Posterior vena cava (tissue), 2 donors: ENCODE measurements at regions of chr14 and their contacts with region 1.

Region 1: DNA sequence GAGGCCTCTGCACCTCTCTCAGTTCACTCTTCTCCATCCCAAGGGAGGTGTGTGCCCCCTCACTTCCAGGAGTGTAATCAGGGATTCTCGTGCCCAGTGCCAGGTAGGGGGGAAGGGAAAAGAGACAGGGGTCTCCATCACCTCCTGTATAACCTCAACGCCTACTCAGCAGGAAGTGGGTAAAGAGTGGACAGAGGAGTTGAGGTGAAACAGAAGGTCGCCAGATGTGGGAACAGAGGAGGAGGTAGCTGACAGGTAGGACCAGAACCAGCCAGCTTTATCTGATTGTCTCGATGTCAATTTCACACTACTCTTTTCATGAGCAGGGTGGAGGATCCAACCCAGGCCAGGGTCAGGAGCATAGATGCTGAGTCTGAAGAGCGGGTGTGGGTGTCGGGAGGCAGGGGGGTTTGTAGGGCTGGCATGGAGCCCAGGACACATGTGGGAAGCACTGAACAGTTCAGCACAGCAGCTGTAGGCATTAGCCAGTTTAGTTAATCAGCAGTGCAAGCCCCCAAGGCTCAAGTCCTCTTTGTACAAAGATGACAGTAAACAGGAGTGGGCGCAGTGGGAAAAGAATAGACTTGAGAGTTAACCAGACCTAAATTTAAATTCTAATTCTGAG is 213.5 kb downstream of the PELI2 start:
- DNase-seq: no peak

Region 2: DNA sequence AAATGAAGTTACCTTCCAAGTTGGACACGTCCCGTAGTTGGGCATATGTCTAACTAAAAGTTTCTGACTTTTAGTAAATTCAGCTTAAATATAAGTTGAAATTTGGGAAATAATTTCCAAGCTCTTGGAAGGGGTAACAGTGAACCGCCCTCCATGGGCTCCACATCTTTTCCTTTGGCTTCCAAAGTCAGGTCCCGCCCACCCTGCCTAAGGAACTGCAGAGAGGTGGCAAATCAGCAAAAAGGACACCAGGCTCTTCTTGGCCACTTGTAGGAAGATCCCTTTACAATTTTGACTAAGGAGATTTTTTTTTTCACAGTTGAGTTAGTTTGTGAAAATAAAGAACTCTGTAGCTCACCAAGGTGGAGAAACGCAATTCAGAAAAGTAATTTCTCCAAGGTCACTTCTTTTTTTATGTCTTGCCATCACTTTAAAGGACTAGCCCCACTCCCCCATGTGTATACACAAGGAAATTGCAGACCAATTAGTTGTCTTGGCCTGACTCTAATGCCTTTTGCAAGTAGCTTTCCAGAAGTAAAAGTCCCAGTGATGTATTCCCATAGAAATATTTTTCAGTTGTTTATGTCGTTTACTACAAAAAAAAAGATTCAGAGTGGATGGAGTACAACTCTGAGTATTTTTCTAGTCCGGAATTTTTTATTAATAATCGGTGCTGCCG is 32.3 kb before region 1 on chr14:
- intact Hi-C with region 1: loop called in 1 of 2 experiments (anchors 2 kb)
- DNase-seq: no peak

Region 3: GRCh38 chr14:56310643-56311042 is 21.1 kb before region 1 on chr14:
- intact Hi-C with region 1: loop called in 1 of 2 experiments (anchors 1 kb)
- DNase-seq: no peak